Pancreas (tissue), 10 donors: ENCODE measurements at regions of chr7 and their contacts with region 1.

Region 1: DNA sequence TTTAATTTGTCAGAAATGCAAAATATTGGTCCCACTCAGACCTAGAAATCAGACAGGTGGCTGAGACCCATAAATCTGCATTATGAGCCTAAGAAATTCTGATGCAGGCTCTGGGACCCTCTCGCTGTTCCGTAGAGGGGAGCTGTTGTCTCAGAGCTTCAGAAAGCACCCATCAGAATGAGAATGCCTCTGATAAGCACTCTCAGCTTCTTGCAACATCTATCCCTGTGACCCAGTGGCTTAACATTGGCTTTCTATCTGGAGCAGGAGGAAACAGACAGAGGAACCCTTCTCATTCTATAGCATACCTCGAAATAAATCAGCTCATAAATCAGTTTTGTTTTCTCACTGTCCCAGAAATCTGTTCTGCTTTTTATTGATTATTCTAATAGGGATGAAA is 184.6 kb upstream of the SP4 start:
- DNase-seq: no peak
- ATAC-seq: no peak
- H3K4me3 ChIP-seq: no peak overlapping the region
- H3K27ac ChIP-seq: no peak overlapping the region
- H3K4me1 ChIP-seq: no peaks in the 10 kb centered on the region
- H3K27me3 ChIP-seq: peaks cover 0 to 13% (median 3%) of the 10 kb centered on the region in 4 donors
- CTCF ChIP-seq: no peak

Region 2: GRCh38 chr7:20786779-20787659 is 456.2 kb before region 1 on chr7 and contains the start of gene SP8:
- intact Hi-C with region 1: loop called in 1 of 3 experiments (anchors 10 kb)
- DNase-seq: no peak
- ATAC-seq: peak in 2 of 4 donors; percentile 29 to 56
- H3K4me3 ChIP-seq: peak within 1 kb of the TSS in 2 of 4 donors; percentile 3 to 33
- H3K27ac ChIP-seq: no peak within 1 kb of the TSS
- H3K4me1 ChIP-seq: peaks cover 0 to 5% (median 0%) of the 10 kb centered on the region in 3 donors
- H3K27me3 ChIP-seq: peaks cover 8 to 93% (median 54%) of the 10 kb centered on the region in 4 donors
- CTCF ChIP-seq: no peak
- total RNA-seq, gene SP8: not detected